Panc1 (cell line): ENCODE measurements at regions of chr13 and their contacts with region 1.

Region 1: GRCh38 chr13:96822895-96823294 is 171.4 kb downstream of the OXGR1 start:
- DNase-seq: no peak
- ATAC-seq: peak; percentile 84
- H3K4me3 ChIP-seq: no peak overlapping the region
- H3K27ac ChIP-seq: no peak overlapping the region
- H3K4me1 ChIP-seq: no peaks in the 10 kb centered on the region
- H3K27me3 ChIP-seq: no peaks in the 10 kb centered on the region
- CTCF ChIP-seq: peak; percentile 50

Region 2: GRCh38 chr13:96958286-96958891 is 135.5 kb after region 1 on chr13:
- CTCF ChIA-PET with region 1: interaction called, 3 read pairs
- POLR2A ChIA-PET with region 1: no interaction called
- in situ Hi-C with region 1: no loop called
- intact Hi-C with region 1: loop called (anchors 5 kb)
- DNase-seq: no peak
- ATAC-seq: peak; percentile 63; the same call in 1 of the 2 replicates
- H3K4me3 ChIP-seq: no peak overlapping the region
- H3K27ac ChIP-seq: no peak overlapping the region
- H3K4me1 ChIP-seq: no peaks in the 10 kb centered on the region
- H3K27me3 ChIP-seq: no peaks in the 10 kb centered on the region
- CTCF ChIP-seq: peak; percentile 71; the same call in 1 of the 2 replicates

Region 3: DNA sequence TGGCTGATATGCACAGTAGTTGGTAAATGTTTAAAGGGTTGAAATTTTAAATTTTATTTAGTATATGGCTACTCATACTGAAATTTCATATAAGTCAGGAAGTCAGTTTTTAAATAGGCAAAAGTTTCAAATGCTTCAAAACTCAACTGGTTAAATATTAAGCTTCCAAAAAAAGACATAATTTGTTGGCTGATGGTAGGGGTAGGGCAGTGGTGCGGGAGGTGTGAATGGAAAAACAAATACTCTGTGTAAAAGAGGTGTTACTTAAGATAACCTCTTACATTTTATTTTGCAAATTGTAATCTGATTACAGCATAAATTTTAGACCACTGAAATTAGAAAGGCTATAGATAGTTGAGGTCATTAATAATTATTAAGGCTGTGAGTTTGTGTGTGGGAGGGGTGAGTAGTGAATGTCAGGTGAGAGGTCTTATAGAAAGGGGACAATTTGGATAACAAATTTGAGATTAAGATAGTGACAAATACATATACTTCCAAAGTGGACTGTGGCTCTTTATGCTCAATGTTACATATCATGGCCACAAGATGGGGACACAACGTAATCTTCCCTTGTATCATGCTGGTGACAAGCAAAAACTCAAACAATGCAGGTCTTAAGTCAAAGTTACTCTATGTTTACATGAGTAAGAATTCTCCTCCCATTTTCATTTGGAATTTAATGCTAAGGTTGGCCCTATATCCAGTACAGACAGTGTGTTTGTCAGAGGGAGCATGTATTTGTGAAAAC is 208.0 kb after region 1 on chr13:
- CTCF ChIA-PET with region 1: no interaction called
- POLR2A ChIA-PET with region 1: no interaction called
- in situ Hi-C with region 1: no loop called
- intact Hi-C with region 1: loop called (anchors 5 kb)
- DNase-seq: no peak
- ATAC-seq: peak; percentile 74
- H3K4me3 ChIP-seq: no peak overlapping the region
- H3K27ac ChIP-seq: 0 out of 2 replicates have a peak overlapping the region, but pooled peaks have one; percentile 39
- H3K4me1 ChIP-seq: peaks cover 5% of the 10 kb centered on the region
- H3K27me3 ChIP-seq: no peaks in the 10 kb centered on the region
- CTCF ChIP-seq: peak; percentile 54; the same call in 1 of the 2 replicates

Region 4: DNA sequence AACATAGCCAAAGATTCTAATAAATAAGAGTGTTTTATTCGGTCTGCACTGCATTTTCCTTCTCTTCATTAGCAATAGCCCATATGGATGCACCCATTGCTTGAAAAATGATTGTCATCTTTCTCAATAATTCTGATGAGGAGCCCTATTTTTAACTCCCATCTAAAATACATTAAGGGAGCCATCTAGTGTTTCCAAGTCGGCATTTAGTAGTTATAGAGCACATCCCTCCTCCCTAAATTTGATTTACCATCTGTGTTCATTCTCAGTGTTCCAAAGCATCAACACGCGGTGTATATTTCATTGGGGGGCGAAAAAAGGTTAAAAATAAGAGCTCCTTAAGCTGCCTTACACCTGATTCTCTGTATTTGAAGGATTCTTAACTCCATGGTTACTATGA is 1011.4 kb after region 1 on chr13:
- CTCF ChIA-PET with region 1: interaction called, 14 read pairs
- POLR2A ChIA-PET with region 1: no interaction called
- in situ Hi-C with region 1: no loop called
- intact Hi-C with region 1: no loop called
- DNase-seq: no peak
- ATAC-seq: 0 out of 2 replicates have a peak, but pooled peaks have one; percentile 63
- H3K4me3 ChIP-seq: no peak overlapping the region
- H3K27ac ChIP-seq: no peak overlapping the region
- H3K4me1 ChIP-seq: no peaks in the 10 kb centered on the region
- H3K27me3 ChIP-seq: no peaks in the 10 kb centered on the region
- CTCF ChIP-seq: no peak